ENCODE measurements at regions of chr2 and their contacts with region 1.

Region 1: DNA sequence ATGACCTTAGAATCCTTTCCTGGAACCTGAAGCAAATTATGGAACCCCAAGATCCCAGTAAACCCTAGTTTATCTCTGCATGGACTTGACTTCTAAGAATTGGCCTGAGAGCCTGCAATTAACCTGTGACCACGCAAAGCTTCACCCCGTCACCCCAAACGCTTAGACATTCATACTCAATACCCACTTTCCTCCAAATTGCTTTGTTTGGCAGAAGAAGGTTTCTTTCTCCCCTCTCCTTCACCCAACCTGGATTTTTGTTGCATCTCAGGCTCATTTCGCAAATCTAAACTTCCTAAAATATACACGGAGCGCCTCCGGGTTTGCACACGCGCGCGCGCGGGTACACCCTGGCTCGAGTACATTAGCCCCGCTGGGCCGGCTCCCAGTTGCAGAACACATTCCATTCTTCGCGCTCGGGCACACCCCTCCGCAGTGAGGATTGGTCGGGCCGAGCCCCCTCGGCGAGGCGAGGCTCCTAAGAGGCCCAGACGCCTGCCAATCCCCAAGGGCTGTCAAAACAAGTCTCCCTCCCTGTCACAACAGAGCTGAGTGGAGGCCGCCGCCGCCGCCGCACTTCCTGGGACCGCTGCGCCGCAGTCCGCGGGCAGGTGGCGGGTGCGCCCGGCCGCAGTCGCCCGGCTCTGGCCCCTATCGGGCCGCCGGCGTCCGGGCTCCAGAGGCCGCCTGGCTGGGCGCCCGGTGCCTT is at the start of gene PLCL1:
- DNase-seq: peak; percentile 93 to 94
- ATAC-seq: peak; percentile 93 to 96 (median 95)
- H3K4me3 ChIP-seq: peak within 1 kb of the TSS; percentile 69 to 89 (median 84)
- H3K27ac ChIP-seq: peak within 1 kb of the TSS; percentile 63 to 88 (median 84)
- H3K4me1 ChIP-seq: peaks cover 0 to 54% (median 21%) of the 10 kb centered on the region in 9 donors
- H3K27me3 ChIP-seq: peaks cover 0 to 23% (median 0%) of the 10 kb centered on the region in 7 donors
- CTCF ChIP-seq: peak in 3 of 9 donors; percentile 6 to 49 (median 25)
- total RNA-seq, gene PLCL1: 76.8 to 131 (median 108) TPM

Region 2: GRCh38 chr2:197851451-197851850 is 47.2 kb after region 1 on chr2:
- intact Hi-C with region 1: loop called in 1 of 10 experiments (anchors 5 kb)
- DNase-seq: no peak
- ATAC-seq: peak in 1 of 8 donors; percentile 32
- H3K4me3 ChIP-seq: no peak overlapping the region
- H3K27ac ChIP-seq: peak overlapping the region in 2 of 10 donors; percentile 19 to 36
- H3K4me1 ChIP-seq: peaks cover 0 to 94% (median 56%) of the 10 kb centered on the region in 9 donors
- H3K27me3 ChIP-seq: no peaks in the 10 kb centered on the region
- CTCF ChIP-seq: peak in 3 of 9 donors; percentile 14 to 20 (median 17)

Region 3: DNA sequence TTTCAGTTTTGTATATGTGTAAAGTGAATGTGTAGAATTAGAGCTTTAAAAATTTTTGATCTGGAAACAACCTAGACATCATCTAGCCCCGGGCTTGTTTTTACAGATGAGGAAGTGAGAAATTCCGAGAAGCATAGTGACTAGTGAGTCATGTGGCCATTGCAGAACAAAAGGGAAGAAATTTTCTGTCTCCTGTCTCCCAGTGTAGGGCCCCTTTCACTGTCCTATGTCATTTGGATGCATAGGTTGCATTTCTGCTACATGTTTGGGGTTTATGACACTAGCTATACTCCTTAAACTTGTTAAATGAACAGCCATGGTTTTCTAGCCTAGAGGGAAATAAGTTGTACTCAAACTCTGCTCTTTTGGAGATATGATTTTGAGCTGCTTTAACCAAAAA is 84.8 kb after region 1 on chr2:
- intact Hi-C with region 1: loop called in 2 of 10 experiments (anchors 10 kb)
- DNase-seq: no peak
- ATAC-seq: peak in 2 of 8 donors; percentile 52 to 67
- H3K4me3 ChIP-seq: no peak overlapping the region
- H3K27ac ChIP-seq: peak overlapping the region in 7 of 10 donors; percentile 3 to 60 (median 29)
- H3K4me1 ChIP-seq: peaks cover 0 to 62% (median 31%) of the 10 kb centered on the region in 9 donors
- H3K27me3 ChIP-seq: no peaks in the 10 kb centered on the region
- CTCF ChIP-seq: no peak

Region 4: GRCh38 chr2:197958592-197959150 is 154.5 kb after region 1 on chr2:
- intact Hi-C with region 1: loop called in 4 of 10 experiments (anchors 5 to 10 kb)
- DNase-seq: no peak
- ATAC-seq: peak; percentile 74 to 96 (median 91)
- H3K4me3 ChIP-seq: no peak overlapping the region
- H3K27ac ChIP-seq: peak overlapping the region in 7 of 10 donors; percentile 9 to 63 (median 53)
- H3K4me1 ChIP-seq: peaks cover 0 to 55% (median 22%) of the 10 kb centered on the region in 9 donors
- H3K27me3 ChIP-seq: no peaks in the 10 kb centered on the region
- CTCF ChIP-seq: no peak

Region 5: DNA sequence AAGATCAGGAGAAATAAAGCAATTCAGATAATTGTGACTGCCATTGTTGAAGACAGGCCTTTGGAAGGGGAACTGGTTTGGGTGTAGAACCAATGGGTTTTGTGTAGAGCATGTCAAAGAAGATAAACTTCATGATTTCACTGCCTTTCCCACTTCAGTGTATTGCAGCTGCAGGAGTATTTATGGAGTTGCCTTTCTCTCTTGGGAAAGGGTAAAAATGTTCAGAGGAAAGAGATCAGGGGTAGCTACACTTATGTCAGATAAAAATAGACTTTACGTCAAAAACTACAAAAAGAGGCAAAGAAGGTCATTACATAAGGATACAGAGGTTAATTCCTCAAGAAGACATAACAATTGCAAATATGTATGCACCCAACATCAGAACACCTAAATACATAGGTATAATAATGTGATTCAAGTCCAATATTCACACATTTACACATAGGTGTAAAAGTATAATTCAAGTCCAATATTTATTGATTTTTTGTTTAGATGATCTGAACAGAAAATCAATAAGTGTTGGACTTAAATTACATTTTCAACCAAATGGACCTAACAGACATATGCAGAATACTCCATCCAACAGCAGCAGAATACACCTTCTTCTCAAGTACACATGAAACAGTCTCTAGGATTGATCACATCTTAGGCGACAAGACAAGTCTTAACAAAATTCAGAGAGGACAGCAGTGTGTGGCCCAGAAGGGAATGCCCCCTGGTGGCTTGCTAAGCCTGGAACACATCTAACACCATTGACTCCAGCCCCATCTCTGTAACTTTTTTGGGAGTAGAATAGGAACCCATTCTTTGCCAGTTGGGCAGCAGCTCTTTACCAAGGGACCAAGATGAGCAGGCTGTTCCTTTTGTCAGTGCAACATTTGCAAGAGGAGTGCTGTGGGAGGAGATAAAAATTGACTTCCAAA is 249.8 kb after region 1 on chr2:
- intact Hi-C with region 1: loop called in 8 of 10 experiments (anchors 2 to 10 kb)
- DNase-seq: no peak
- ATAC-seq: peak; percentile 33 to 78 (median 58)
- H3K4me3 ChIP-seq: no peak overlapping the region
- H3K27ac ChIP-seq: peak overlapping the region in 8 of 10 donors; percentile 7 to 65 (median 52)
- H3K4me1 ChIP-seq: peaks cover 3 to 54% (median 21%) of the 10 kb centered on the region in 9 donors
- H3K27me3 ChIP-seq: no peaks in the 10 kb centered on the region
- CTCF ChIP-seq: peak in 8 of 9 donors; percentile 13 to 58 (median 45)

Region 6: GRCh38 chr2:198296665-198297308 is 492.6 kb after region 1 on chr2:
- intact Hi-C with region 1: loop called (anchors 1 to 10 kb)
- DNase-seq: peak in 1 of 2 donors; percentile 32
- ATAC-seq: peak in 7 of 8 donors; percentile 72 to 88 (median 76)
- H3K4me3 ChIP-seq: no peak overlapping the region
- H3K27ac ChIP-seq: no peak overlapping the region
- H3K4me1 ChIP-seq: peaks cover 0 to 6% (median 0%) of the 10 kb centered on the region in 9 donors
- H3K27me3 ChIP-seq: peaks cover 0 to 11% (median 0%) of the 10 kb centered on the region in 7 donors
- CTCF ChIP-seq: peak; percentile 62 to 89 (median 88)